ENCODE measurements at regions of chrX and their contacts with region 1.

Region 1: GRCh38 chrX:48021026-48021900 is 14.5 kb downstream of the SPACA5 start:
- DNase-seq: peak; percentile 89
- H3K4me3 Mint-ChIP-seq: peak overlapping the region; percentile 94
- H3K27ac Mint-ChIP-seq: peak overlapping the region; percentile 98
- H3K4me1 Mint-ChIP-seq: peaks cover 16% of the 10 kb centered on the region
- H3K27me3 Mint-ChIP-seq: no peaks in the 10 kb centered on the region

Region 2: DNA sequence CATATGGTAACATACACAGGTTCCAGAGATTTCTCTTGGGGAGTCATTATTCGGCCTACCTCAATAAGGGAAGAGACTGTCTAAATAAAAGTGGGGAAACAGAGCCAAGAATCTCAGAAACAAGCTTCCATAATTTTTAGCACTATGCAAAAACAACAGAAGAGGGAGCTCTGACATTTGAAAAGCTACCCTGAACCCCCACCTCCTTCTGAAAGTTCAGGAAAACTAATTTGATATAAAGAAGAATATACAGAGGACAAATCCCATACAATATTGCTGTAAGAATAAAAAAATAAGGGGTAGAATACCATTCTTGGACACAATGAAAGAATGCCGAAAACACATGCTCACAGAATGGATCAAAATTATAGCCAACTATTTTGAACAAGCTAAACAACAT is 524.0 kb before region 1 on chrX:
- intact Hi-C with region 1: loop called (anchors 10 kb)
- DNase-seq: no peak
- H3K4me3 Mint-ChIP-seq: no peak overlapping the region
- H3K27ac Mint-ChIP-seq: no peak overlapping the region
- H3K4me1 Mint-ChIP-seq: no peaks in the 10 kb centered on the region
- H3K27me3 Mint-ChIP-seq: no peaks in the 10 kb centered on the region

Region 3: GRCh38 chrX:47836164-47837072 is 184.8 kb before region 1 on chrX and contains the start of gene ZNF81:
- intact Hi-C with region 1: loop called (anchors 1 kb)
- DNase-seq: peak; percentile 97
- H3K4me3 Mint-ChIP-seq: peak within 1 kb of the TSS; percentile 99
- H3K27ac Mint-ChIP-seq: peak within 1 kb of the TSS; percentile 99
- H3K4me1 Mint-ChIP-seq: peaks cover 15% of the 10 kb centered on the region
- H3K27me3 Mint-ChIP-seq: no peaks in the 10 kb centered on the region
- total RNA-seq, gene ZNF81: 4.0 and 9.0 TPM in 2 replicates

Region 4: DNA sequence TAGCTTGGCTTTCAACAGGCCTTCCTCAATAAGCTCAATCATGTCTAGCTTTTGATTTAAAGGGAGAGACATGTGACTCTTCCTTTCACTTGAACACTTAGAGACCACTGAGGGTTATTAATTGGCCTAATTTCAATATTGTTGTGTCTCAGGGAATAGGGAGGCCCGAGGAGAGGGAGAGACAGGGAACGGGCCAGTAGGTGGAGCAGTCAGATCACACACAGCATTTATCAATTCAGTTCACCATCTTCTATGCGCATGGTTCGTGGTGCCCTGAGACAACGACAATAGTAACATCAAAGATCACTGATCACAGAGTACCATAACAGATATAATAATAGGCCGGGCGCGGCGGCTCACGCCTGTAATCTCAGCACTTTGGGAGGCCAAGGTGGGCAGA is 166.8 kb before region 1 on chrX:
- intact Hi-C with region 1: loop called (anchors 1 kb)
- DNase-seq: peak; percentile 68
- H3K4me3 Mint-ChIP-seq: no peak overlapping the region
- H3K27ac Mint-ChIP-seq: no peak overlapping the region
- H3K4me1 Mint-ChIP-seq: peaks cover 4% of the 10 kb centered on the region
- H3K27me3 Mint-ChIP-seq: no peaks in the 10 kb centered on the region

Region 5: DNA sequence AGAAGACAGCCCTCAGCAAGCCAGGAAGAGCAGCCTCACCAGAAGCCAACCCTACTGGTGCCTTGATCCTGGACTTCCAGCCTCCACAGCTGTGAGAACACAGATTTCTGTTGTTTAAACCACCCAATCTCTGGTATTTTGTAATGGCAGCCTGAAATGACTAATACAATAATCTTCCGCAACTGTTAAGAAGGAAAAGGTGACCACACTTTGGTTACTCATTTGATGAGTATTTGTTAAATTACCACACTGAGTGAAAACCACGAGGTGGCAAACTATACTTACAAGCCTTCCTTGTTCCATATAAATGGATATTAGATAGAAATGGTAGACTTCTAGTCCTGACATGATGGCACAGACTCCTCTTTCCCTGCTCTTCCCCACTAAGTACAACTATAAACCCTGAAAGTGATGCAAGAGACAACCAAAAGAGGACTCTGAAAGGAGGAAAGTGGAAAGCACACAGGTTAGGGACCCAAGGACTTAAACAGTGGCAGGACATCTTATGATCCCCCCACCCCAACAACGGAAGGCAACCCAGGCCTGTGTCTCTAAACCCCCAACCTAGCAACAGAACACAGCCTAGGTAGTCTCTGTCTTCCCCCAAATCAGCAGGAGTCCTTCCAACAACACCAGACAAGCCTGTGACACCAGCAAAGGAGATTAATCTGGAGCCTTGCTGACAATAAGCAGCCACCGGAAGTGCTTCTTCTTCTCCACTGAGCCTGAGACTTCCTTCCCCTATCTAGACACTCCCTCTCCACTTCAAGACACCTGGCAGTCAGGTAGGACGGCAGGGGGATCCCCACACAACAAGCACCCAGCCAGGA is 29.8 kb before region 1 on chrX:
- intact Hi-C with region 1: loop called (anchors 5 kb)
- DNase-seq: no peak
- H3K4me3 Mint-ChIP-seq: no peak overlapping the region
- H3K27ac Mint-ChIP-seq: peak overlapping the region; percentile 67
- H3K4me1 Mint-ChIP-seq: peaks cover 17% of the 10 kb centered on the region
- H3K27me3 Mint-ChIP-seq: no peaks in the 10 kb centered on the region

Measured in activated CD4-positive, alpha-beta T cell treated with anti-CD3 and anti-CD28 coated beads, Interleukin-2, amount 10 ng/mL, durations not matched to agents 24 days and 14 days (primary cell).